ENCODE measurements at regions of chr12 and their contacts with region 1.

Region 1: GRCh38 chr12:45728630-45729232 is 775 bp upstream of the ARID2 start:
- DNase-seq: peak; percentile 95 to 98
- H3K4me3 ChIP-seq: peak overlapping the region; percentile 94 to 95
- H3K27ac ChIP-seq: peak overlapping the region; percentile 100
- H3K4me1 ChIP-seq: peaks cover 0 to 44% (median 20%) of the 10 kb centered on the region in 4 donors
- H3K27me3 ChIP-seq: no peaks in the 10 kb centered on the region
- CTCF ChIP-seq: peak; percentile 96 to 97

Region 2: DNA sequence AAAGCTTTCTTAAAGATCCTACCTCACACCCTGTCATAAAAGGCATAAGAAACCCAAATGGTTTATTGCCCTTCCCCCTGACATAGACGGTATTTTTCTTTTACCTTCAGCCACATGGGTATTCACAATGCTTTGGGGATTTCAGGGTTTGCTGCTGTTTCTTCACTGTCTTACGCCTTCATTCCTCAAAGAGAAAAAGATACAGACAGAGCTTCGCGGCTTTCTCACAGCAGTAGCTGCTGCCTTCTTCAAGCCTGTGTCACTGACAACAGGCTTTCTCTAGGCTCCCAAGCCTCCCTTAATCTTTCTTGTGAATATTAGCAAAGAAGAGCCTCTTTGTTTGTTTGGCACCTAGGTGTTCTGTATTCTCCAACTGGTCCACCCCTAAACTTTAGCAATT is 196.6 kb before region 1 on chr12:
- intact Hi-C with region 1: no loop called
- DNase-seq: no peak
- H3K4me3 ChIP-seq: no peak overlapping the region
- H3K27ac ChIP-seq: no peak overlapping the region
- H3K4me1 ChIP-seq: no peaks in the 10 kb centered on the region
- H3K27me3 ChIP-seq: no peaks in the 10 kb centered on the region
- CTCF ChIP-seq: no peak

Region 3: DNA sequence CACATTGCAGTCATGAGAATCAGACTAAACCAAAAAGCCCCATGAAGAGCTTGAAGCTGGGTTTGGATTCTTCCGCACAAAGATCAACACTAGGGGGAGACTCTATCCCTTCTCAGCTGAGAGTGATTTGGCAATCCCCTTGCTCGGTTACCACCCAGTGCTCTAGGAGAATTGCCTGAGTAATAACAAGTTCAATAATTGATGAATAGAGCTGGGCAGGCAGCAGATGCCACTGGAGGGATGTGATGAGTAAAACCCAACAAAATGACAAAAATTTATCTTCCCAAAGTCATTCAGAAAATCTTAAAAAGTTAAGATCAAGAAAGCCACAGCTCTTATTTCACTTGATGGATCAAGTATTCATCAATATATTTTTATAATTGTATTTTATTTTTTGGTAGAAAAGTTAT is 184.8 kb before region 1 on chr12:
- intact Hi-C with region 1: loop called (anchors 10 kb)
- DNase-seq: peak in 1 of 2 donors; percentile 31
- H3K4me3 ChIP-seq: no peak overlapping the region
- H3K27ac ChIP-seq: no peak overlapping the region
- H3K4me1 ChIP-seq: no peaks in the 10 kb centered on the region
- H3K27me3 ChIP-seq: no peaks in the 10 kb centered on the region
- CTCF ChIP-seq: peak; percentile 72 to 75

Region 4: GRCh38 chr12:45688183-45688582 is 40.5 kb before region 1 on chr12:
- intact Hi-C with region 1: no loop called
- DNase-seq: no peak
- H3K4me3 ChIP-seq: no peak overlapping the region
- H3K27ac ChIP-seq: no peak overlapping the region
- H3K4me1 ChIP-seq: peaks cover 0 to 4% (median 2%) of the 10 kb centered on the region in 4 donors
- H3K27me3 ChIP-seq: no peaks in the 10 kb centered on the region
- CTCF ChIP-seq: no peak

Region 5: GRCh38 chr12:45713078-45713477 is 15.7 kb before region 1 on chr12:
- intact Hi-C with region 1: no loop called
- DNase-seq: no peak
- H3K4me3 ChIP-seq: no peak overlapping the region
- H3K27ac ChIP-seq: no peak overlapping the region
- H3K4me1 ChIP-seq: peaks cover 0 to 7% (median 3%) of the 10 kb centered on the region in 4 donors
- H3K27me3 ChIP-seq: no peaks in the 10 kb centered on the region
- CTCF ChIP-seq: no peak

Region 6: GRCh38 chr12:45828402-45828801 is 99.7 kb after region 1 on chr12:
- intact Hi-C with region 1: no loop called
- DNase-seq: no peak
- H3K4me3 ChIP-seq: no peak overlapping the region
- H3K27ac ChIP-seq: no peak overlapping the region
- H3K4me1 ChIP-seq: no peaks in the 10 kb centered on the region
- H3K27me3 ChIP-seq: no peaks in the 10 kb centered on the region
- CTCF ChIP-seq: no peak

Region 7: GRCh38 chr12:45990468-45991283 is 261.9 kb after region 1 on chr12 and contains the start of gene SCAF11:
- intact Hi-C with region 1: loop called (anchors 2 kb)
- DNase-seq: peak; percentile 100
- H3K4me3 ChIP-seq: peak within 1 kb of the TSS; percentile 93 to 95
- H3K27ac ChIP-seq: peak within 1 kb of the TSS; percentile 99 to 100
- H3K4me1 ChIP-seq: peaks cover 0 to 35% (median 29%) of the 10 kb centered on the region in 4 donors
- H3K27me3 ChIP-seq: no peaks in the 10 kb centered on the region
- CTCF ChIP-seq: peak; percentile 95 to 99

Measured in tibial artery (tissue), 4 donors.